ENCODE measurements at regions of chr5 and their contacts with region 1.

Region 1: GRCh38 chr5:141747152-141748141 is 65.4 kb upstream of the ARAP3 start:
- DNase-seq: peak; percentile 52
- H3K4me3 ChIP-seq: no peak overlapping the region
- H3K27ac ChIP-seq: no peak overlapping the region
- H3K4me1 ChIP-seq: no peaks in the 10 kb centered on the region
- H3K27me3 ChIP-seq: peaks cover 20 to 21% of the 10 kb centered on the region in 2 experiments
- CTCF ChIP-seq: no peak
- POLR2A ChIP-seq: no peak

Region 2: GRCh38 chr5:141734501-141735230 is 12.8 kb before region 1 on chr5:
- CTCF ChIA-PET with region 1: no interaction called
- POLR2A ChIA-PET with region 1: no interaction called
- dilution Hi-C with region 1: no loop called
- intact Hi-C with region 1: loop called (anchors 1 kb)
- DNase-seq: peak; percentile 47
- H3K4me3 ChIP-seq: no peak overlapping the region
- H3K27ac ChIP-seq: no peak overlapping the region
- H3K4me1 ChIP-seq: no peaks in the 10 kb centered on the region
- H3K27me3 ChIP-seq: peaks cover 11% of the 10 kb centered on the region in 2 experiments
- CTCF ChIP-seq: no peak
- POLR2A ChIP-seq: no peak

Measured in endothelial cell of umbilical vein (primary cell).